Activated CD4-positive, alpha-beta T cell treated with anti-CD3 and anti-CD28 coated beads, Interleukin-2, amount 10 ng/mL, durations not matched to agents 7 days and 5 days (primary cell): ENCODE measurements at regions of chr7 and their contacts with region 1.

Region 1: GRCh38 chr7:151782598-151783448 is 94.1 kb downstream of the PRKAG2 start:
- DNase-seq: peak; percentile 66
- H3K4me3 Mint-ChIP-seq: peak overlapping the region; percentile 68
- H3K27ac Mint-ChIP-seq: peak overlapping the region; percentile 78
- H3K4me1 Mint-ChIP-seq: peaks cover 14% of the 10 kb centered on the region
- H3K27me3 Mint-ChIP-seq: no peaks in the 10 kb centered on the region

Region 2: GRCh38 chr7:151793531-151793951 is 10.7 kb after region 1 on chr7:
- CTCF ChIA-PET with region 1: interaction called, 20 read pairs
- POLR2A ChIA-PET with region 1: no interaction called
- DNase-seq: no peak
- H3K4me3 Mint-ChIP-seq: no peak overlapping the region
- H3K27ac Mint-ChIP-seq: no peak overlapping the region
- H3K4me1 Mint-ChIP-seq: peaks cover 8% of the 10 kb centered on the region
- H3K27me3 Mint-ChIP-seq: no peaks in the 10 kb centered on the region